Activated CD8-positive, alpha-beta T cell treated with anti-CD3 and anti-CD28 coated beads for 36 hours (primary cell): ENCODE measurements at regions of chr22 and their contacts with region 1.

Region 1: GRCh38 chr22:40024201-40025061 is 29.7 kb downstream of the FAM83F start:
- DNase-seq: peak; percentile 76
- ATAC-seq: peak; percentile 83
- H3K4me3 Mint-ChIP-seq: no peak overlapping the region
- H3K27ac Mint-ChIP-seq: no peak overlapping the region
- H3K4me1 Mint-ChIP-seq: peaks cover 5% of the 10 kb centered on the region
- H3K27me3 Mint-ChIP-seq: no peaks in the 10 kb centered on the region
- CTCF ChIP-seq: peak; percentile 99

Region 2: GRCh38 chr22:39543095-39543494 is 481.3 kb before region 1 on chr22:
- CTCF ChIA-PET with region 1: interaction called, 94 read pairs
- POLR2A ChIA-PET with region 1: no interaction called
- intact Hi-C with region 1: no loop called
- DNase-seq: peak; percentile 59
- ATAC-seq: peak; percentile 47
- H3K4me3 Mint-ChIP-seq: no peak overlapping the region
- H3K27ac Mint-ChIP-seq: no peak overlapping the region
- H3K4me1 Mint-ChIP-seq: peaks cover 11% of the 10 kb centered on the region
- H3K27me3 Mint-ChIP-seq: peaks cover 24% of the 10 kb centered on the region
- CTCF ChIP-seq: peak; percentile 38

Region 3: GRCh38 chr22:39908737-39909136 is 115.7 kb before region 1 on chr22:
- CTCF ChIA-PET with region 1: interaction called, 13 read pairs
- POLR2A ChIA-PET with region 1: no interaction called
- intact Hi-C with region 1: no loop called
- DNase-seq: peak; percentile 66
- ATAC-seq: peak; percentile 55
- H3K4me3 Mint-ChIP-seq: peak overlapping the region; percentile 80
- H3K27ac Mint-ChIP-seq: peak overlapping the region; percentile 92
- H3K4me1 Mint-ChIP-seq: peaks cover 61% of the 10 kb centered on the region
- H3K27me3 Mint-ChIP-seq: no peaks in the 10 kb centered on the region
- CTCF ChIP-seq: no peak

Region 4: GRCh38 chr22:39932918-39933649 is 91.3 kb before region 1 on chr22:
- CTCF ChIA-PET with region 1: interaction called, 28 read pairs
- POLR2A ChIA-PET with region 1: interaction called, 3 read pairs
- intact Hi-C with region 1: no loop called
- DNase-seq: peak; percentile 81
- ATAC-seq: peak; percentile 67
- H3K4me3 Mint-ChIP-seq: peak overlapping the region; percentile 72
- H3K27ac Mint-ChIP-seq: peak overlapping the region; percentile 90
- H3K4me1 Mint-ChIP-seq: peaks cover 50% of the 10 kb centered on the region
- H3K27me3 Mint-ChIP-seq: no peaks in the 10 kb centered on the region
- CTCF ChIP-seq: peak; percentile 92

Region 5: GRCh38 chr22:39997939-39998338 is 26.5 kb before region 1 on chr22:
- CTCF ChIA-PET with region 1: interaction called, 19 read pairs
- POLR2A ChIA-PET with region 1: interaction called, 4 read pairs
- intact Hi-C with region 1: no loop called
- DNase-seq: no peak
- ATAC-seq: no peak
- H3K4me3 Mint-ChIP-seq: no peak overlapping the region
- H3K27ac Mint-ChIP-seq: no peak overlapping the region
- H3K4me1 Mint-ChIP-seq: peaks cover 16% of the 10 kb centered on the region
- H3K27me3 Mint-ChIP-seq: peaks cover 7% of the 10 kb centered on the region
- CTCF ChIP-seq: no peak

Region 6: GRCh38 chr22:40044102-40044869 is 19.9 kb after region 1 on chr22:
- CTCF ChIA-PET with region 1: interaction called, 37 read pairs
- POLR2A ChIA-PET with region 1: interaction called, 6 read pairs
- intact Hi-C with region 1: no loop called
- DNase-seq: peak; percentile 99
- ATAC-seq: peak; percentile 88
- H3K4me3 Mint-ChIP-seq: peak overlapping the region; percentile 87
- H3K27ac Mint-ChIP-seq: peak overlapping the region; percentile 99
- H3K4me1 Mint-ChIP-seq: peaks cover 26% of the 10 kb centered on the region
- H3K27me3 Mint-ChIP-seq: no peaks in the 10 kb centered on the region
- CTCF ChIP-seq: no peak

Region 7: DNA sequence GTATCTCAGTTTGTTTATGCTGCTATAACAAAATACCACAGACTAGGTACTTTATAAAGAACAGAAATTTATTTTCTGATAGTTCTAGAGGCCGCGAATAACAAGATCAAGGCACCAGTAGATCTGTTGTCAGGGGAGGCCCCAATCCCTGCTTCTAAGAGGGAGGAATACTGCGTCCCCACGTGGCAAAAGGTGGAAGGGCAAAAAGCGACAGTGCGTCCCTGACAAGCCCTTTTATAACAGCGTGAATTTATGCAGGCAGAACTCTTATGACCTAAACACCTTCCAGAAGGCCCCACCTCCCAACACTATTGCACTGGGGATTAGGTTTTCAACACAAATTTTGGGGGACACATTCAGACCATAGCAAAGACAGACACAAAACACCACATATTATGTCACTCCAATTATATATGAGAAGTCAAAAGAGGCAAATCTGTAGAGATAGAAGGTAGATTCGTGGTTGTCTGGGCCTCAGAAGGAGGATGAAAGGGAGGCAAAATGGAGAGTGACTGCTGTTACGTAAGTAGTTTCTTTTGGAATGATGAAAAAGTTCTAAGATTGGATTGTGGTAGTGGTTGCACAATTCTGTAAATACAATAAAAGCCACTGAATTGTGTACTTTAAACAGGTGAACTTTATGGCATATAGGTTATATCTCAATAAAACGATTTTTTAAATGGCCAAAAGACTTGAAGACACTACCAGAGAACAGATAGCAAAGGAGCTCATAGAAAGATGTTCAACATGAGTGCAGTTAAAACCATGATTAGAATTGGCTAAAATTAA is 123.2 kb after region 1 on chr22:
- CTCF ChIA-PET with region 1: no interaction called
- POLR2A ChIA-PET with region 1: no interaction called
- intact Hi-C with region 1: no loop called
- DNase-seq: no peak
- ATAC-seq: no peak
- H3K4me3 Mint-ChIP-seq: no peak overlapping the region
- H3K27ac Mint-ChIP-seq: no peak overlapping the region
- H3K4me1 Mint-ChIP-seq: peaks cover 3% of the 10 kb centered on the region
- H3K27me3 Mint-ChIP-seq: no peaks in the 10 kb centered on the region
- CTCF ChIP-seq: no peak